Gastrocnemius medialis (tissue), 4 donors: ENCODE measurements at regions of chr2 and their contacts with region 1.

Region 1: DNA sequence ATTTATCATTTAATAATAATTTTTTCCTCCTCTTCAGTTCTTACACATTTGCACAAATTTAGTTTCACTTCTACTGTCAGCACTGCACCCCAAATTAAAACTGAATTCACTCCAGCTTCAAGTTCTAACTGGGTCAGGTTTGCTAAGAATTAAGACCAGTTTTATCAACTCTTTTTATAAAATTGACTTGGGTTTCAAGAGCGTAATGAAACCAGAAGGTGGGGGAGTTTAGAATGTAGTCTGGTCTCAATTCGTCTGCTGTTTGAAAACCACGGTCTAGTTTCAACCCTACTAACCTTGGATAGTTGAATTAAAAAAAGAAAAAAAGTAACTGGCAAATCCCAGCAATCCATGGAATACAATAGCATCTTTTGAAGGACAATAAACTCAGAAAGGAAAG is 14.3 kb upstream of the CTLA4 start:
- DNase-seq: no peak
- ATAC-seq: no peak
- H3K4me3 ChIP-seq: no peak overlapping the region
- H3K27ac ChIP-seq: no peak overlapping the region
- H3K4me1 ChIP-seq: no peaks in the 10 kb centered on the region
- H3K27me3 ChIP-seq: no peaks in the 10 kb centered on the region
- CTCF ChIP-seq: no peak
- POLR2A ChIP-seq: no peak

Region 2: GRCh38 chr2:204234879-204235278 is 381.6 kb after region 1 on chr2:
- in situ Hi-C with region 1: no loop called
- intact Hi-C with region 1: loop called (anchors 5 kb)
- DNase-seq: no peak
- ATAC-seq: no peak
- H3K4me3 ChIP-seq: no peak overlapping the region
- H3K27ac ChIP-seq: no peak overlapping the region
- H3K4me1 ChIP-seq: no peaks in the 10 kb centered on the region
- H3K27me3 ChIP-seq: no peaks in the 10 kb centered on the region
- CTCF ChIP-seq: no peak
- POLR2A ChIP-seq: no peak